Activated CD4-positive, alpha-beta memory T cell treated with anti-CD3 and anti-CD28 coated beads for 36 hours (primary cell): ENCODE measurements at regions of chr17 and their contacts with region 1.

Region 1: DNA sequence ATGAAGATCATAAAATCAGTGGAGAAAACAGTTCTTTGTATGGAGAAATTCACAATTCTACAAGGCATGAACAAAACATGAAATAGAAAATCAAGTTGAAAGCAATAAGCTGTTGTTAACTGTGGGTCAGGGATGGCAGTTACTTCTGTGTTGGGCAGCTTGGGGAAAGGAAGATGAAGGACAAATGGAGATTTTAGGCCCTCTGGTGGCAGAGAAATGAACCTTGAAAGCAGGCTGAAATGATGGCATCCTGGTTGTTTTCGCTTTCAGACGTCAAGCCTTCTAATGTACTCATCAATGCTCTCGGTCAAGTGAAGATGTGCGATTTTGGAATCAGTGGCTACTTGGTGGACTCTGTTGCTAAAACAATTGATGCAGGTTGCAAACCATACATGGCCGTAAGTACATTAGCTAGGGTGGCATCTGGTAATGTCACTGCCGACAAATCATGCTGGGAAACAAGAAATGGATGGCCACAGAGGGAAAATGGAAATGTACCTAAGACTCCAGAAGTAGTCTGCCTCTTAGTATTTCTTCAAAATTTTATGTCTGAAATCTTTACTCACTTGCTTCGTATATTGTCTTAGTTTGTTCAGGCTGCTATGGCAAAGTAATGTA is 108.9 kb downstream of the MAP2K6 start:
- DNase-seq: peak; percentile 20
- H3K4me3 Mint-ChIP-seq: no peak overlapping the region
- H3K27ac Mint-ChIP-seq: no peak overlapping the region
- H3K4me1 Mint-ChIP-seq: no peaks in the 10 kb centered on the region
- H3K27me3 Mint-ChIP-seq: no peaks in the 10 kb centered on the region

Region 2: GRCh38 chr17:68812876-68813584 is 710.3 kb before region 1 on chr17:
- CTCF ChIA-PET with region 1: no interaction called
- POLR2A ChIA-PET with region 1: no interaction called
- intact Hi-C with region 1: no loop called
- DNase-seq: no peak
- H3K4me3 Mint-ChIP-seq: no peak overlapping the region
- H3K27ac Mint-ChIP-seq: no peak overlapping the region
- H3K4me1 Mint-ChIP-seq: no peaks in the 10 kb centered on the region
- H3K27me3 Mint-ChIP-seq: peaks cover 8% of the 10 kb centered on the region

Region 3: GRCh38 chr17:69335058-69335457 is 188.3 kb before region 1 on chr17:
- CTCF ChIA-PET with region 1: interaction called, 3 read pairs
- POLR2A ChIA-PET with region 1: no interaction called
- intact Hi-C with region 1: loop called (anchors 1 kb)
- DNase-seq: no peak
- H3K4me3 Mint-ChIP-seq: no peak overlapping the region
- H3K27ac Mint-ChIP-seq: no peak overlapping the region
- H3K4me1 Mint-ChIP-seq: peaks cover 3% of the 10 kb centered on the region
- H3K27me3 Mint-ChIP-seq: peaks cover 8% of the 10 kb centered on the region

Region 4: GRCh38 chr17:69358688-69359596 is 164.4 kb before region 1 on chr17:
- CTCF ChIA-PET with region 1: no interaction called
- POLR2A ChIA-PET with region 1: no interaction called
- intact Hi-C with region 1: loop called (anchors 1 kb)
- DNase-seq: no peak
- H3K4me3 Mint-ChIP-seq: no peak overlapping the region
- H3K27ac Mint-ChIP-seq: no peak overlapping the region
- H3K4me1 Mint-ChIP-seq: no peaks in the 10 kb centered on the region
- H3K27me3 Mint-ChIP-seq: no peaks in the 10 kb centered on the region

Region 5: DNA sequence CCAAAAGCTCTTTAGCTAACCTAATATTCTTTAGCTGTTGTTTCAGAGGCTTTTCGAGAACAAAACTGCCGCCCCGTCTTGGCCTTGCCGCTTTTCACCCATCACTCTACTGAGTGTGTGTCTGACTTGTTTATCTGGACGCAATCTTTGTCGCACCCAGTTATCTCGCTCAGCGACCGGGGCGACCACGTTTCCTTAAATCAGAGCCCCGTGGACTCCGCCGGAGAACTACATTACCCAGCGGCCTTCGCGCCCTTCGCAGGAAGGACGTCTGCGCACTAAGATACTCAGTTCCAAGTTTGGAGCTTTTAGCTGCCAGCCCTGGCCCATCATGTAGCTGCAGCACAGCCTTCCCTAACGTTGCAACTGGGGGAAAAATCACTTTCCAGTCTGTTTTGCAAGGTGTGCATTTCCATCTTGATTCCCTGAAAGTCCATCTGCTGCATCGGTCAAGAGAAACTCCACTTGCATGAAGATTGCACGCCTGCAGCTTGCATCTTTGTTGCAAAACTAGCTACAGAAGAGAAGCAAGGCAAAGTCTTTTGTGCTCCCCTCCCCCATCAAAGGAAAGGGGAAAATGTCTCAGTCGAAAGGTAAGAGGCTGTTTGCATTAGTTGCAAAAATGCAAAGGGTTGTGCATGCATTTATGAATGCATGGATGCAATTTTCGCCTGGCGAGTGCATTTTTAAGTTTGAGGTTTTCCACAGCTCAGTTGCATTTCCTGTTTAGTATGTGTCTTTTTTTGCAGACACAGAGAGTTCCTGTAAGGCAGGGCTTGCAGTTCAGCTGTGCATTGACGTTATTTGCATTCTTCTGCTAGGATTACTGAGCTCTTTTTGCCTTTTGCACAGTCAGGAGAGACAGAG is 108.7 kb before region 1 on chr17 and contains the start of gene MAP2K6:
- CTCF ChIA-PET with region 1: interaction called, 3 read pairs
- POLR2A ChIA-PET with region 1: no interaction called
- intact Hi-C with region 1: loop called (anchors 5 kb)
- DNase-seq: peak; percentile 88
- H3K4me3 Mint-ChIP-seq: no peak within 1 kb of the TSS
- H3K27ac Mint-ChIP-seq: no peak within 1 kb of the TSS
- H3K4me1 Mint-ChIP-seq: peaks cover 17% of the 10 kb centered on the region
- H3K27me3 Mint-ChIP-seq: no peaks in the 10 kb centered on the region
- total RNA-seq, gene MAP2K6: 2.2 TPM

Region 6: DNA sequence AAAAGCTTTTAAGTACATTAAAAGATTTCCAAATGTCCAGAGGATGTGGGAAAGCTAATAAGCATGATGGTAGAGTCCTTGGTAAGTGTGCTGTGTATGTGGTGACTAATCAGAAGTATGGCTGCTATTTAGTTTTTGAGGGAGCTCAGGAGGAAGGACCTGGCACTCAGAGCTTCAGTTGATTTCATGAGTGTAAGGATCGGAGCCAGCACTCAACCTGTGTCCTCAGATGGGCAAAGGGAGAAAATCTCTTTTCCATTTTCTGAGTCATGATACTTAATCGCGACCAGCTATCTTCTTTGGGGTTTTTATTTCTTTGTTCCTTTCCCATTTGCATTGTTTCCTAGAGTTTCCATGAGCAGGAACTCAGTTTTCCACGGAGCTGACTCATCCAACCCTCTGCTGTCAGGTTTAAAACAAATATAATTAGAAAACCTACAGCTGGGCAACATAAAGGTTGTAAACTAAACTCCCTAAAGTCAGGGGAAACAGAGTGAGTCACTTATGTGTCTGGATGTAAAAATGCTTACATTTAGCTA is 16.5 kb after region 1 on chr17:
- CTCF ChIA-PET with region 1: interaction called, 11 read pairs
- POLR2A ChIA-PET with region 1: no interaction called
- intact Hi-C with region 1: no loop called
- DNase-seq: no peak
- H3K4me3 Mint-ChIP-seq: no peak overlapping the region
- H3K27ac Mint-ChIP-seq: no peak overlapping the region
- H3K4me1 Mint-ChIP-seq: no peaks in the 10 kb centered on the region
- H3K27me3 Mint-ChIP-seq: no peaks in the 10 kb centered on the region

Region 7: GRCh38 chr17:69575346-69575761 is 52.0 kb after region 1 on chr17:
- CTCF ChIA-PET with region 1: no interaction called
- POLR2A ChIA-PET with region 1: no interaction called
- intact Hi-C with region 1: no loop called
- DNase-seq: no peak
- H3K4me3 Mint-ChIP-seq: no peak overlapping the region
- H3K27ac Mint-ChIP-seq: no peak overlapping the region
- H3K4me1 Mint-ChIP-seq: no peaks in the 10 kb centered on the region
- H3K27me3 Mint-ChIP-seq: peaks cover 3% of the 10 kb centered on the region

Region 8: GRCh38 chr17:70552230-70552981 is 1029.1 kb after region 1 on chr17:
- CTCF ChIA-PET with region 1: interaction called, 3 read pairs
- POLR2A ChIA-PET with region 1: no interaction called
- intact Hi-C with region 1: loop called (anchors 5 kb)
- DNase-seq: no peak
- H3K4me3 Mint-ChIP-seq: no peak overlapping the region
- H3K27ac Mint-ChIP-seq: no peak overlapping the region
- H3K4me1 Mint-ChIP-seq: no peaks in the 10 kb centered on the region
- H3K27me3 Mint-ChIP-seq: no peaks in the 10 kb centered on the region